AG04450 (cell line): ENCODE measurements at regions of chr14 and their contacts with region 1.

Region 1: GRCh38 chr14:51780006-51780692 is 80.3 kb upstream of the GNG2 start:
- DNase-seq: peak; percentile 24
- H3K4me3 ChIP-seq: peak overlapping the region; percentile 31; the same call in 1 of the 2 replicates
- H3K27ac ChIP-seq: no peak overlapping the region
- H3K27me3 ChIP-seq: no peaks in the 10 kb centered on the region
- CTCF ChIP-seq: peak; percentile 71

Region 2: DNA sequence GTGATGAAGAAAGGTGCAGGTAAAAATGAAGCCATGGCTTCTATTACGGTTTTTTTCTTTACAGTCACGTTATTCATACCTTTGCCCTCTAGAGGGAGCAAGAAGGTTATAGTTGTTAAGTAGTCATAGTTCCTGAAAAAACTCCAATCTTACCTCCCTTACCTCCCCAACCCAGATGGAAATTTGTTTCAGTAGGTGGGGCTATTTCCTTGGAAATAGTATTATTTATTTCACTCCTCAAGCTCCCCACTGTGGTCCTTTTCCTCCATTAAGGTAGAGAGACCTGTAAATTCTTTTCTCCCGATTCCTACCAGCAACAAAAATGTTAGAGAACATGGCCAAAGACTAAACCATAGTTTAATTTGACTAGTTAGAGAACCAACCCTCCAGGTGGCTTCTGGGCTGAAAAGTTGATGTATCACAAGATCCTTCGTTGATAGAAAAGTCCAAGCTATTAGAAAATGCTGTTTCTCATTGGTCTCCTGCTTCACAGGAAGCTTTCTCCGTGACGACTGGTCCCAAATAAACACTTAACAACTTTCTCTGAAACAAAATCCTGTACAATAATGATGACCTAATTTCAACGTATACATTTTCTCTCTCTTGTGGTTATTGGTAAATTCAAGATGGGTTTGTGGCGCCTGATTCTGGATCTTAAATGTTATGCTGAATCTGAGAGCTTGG is 496.6 kb before region 1 on chr14:
- CTCF ChIA-PET with region 1: interaction called, 272 read pairs
- POLR2A ChIA-PET with region 1: interaction called, 6 read pairs
- DNase-seq: peak; percentile 83
- H3K4me3 ChIP-seq: no peak overlapping the region
- H3K27ac ChIP-seq: no peak overlapping the region
- H3K27me3 ChIP-seq: no peaks in the 10 kb centered on the region
- CTCF ChIP-seq: peak; percentile 79

Region 3: DNA sequence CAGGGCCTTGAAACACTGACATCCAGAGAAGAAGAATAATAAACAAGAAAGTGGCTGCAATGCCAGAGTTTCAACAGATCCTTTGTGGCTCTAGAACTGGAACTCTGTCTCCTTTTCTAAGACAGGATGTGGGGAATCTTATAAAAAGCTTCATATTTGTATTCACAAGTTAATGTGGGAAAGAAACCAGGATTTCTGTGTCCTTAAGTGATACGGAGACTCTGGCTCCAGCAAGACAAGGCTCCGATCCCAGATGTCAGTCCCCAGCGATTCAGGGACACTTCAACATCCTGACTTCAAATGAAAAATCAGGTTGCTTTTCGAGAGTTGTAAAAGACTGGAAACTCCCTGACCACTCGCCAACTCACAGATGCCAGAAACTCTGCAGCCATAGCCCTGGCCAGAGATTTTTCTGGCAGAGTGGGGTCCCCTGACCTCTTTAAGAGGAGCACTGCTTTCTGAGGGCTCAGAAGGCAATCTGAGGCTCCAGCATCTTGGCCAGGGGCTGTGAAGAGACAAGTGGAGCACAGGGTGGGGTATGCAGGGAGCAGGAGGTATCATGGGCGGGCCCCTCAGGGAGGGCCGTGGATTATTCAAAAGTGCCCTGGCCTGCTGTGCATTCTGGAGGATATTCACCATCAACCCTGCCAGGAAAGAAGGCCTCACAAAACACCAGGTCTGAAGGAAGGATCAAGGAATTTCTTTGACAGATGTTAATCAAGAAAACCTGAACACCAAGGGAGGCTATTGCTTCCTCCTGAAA is 486.8 kb before region 1 on chr14:
- CTCF ChIA-PET with region 1: interaction called, 10 read pairs
- POLR2A ChIA-PET with region 1: no interaction called
- DNase-seq: peak; percentile 15
- H3K4me3 ChIP-seq: no peak overlapping the region
- H3K27ac ChIP-seq: peak overlapping the region; percentile 59
- H3K27me3 ChIP-seq: no peaks in the 10 kb centered on the region
- CTCF ChIP-seq: no peak

Region 4: GRCh38 chr14:51547260-51547659 is 232.9 kb before region 1 on chr14:
- CTCF ChIA-PET with region 1: interaction called, 10 read pairs
- POLR2A ChIA-PET with region 1: no interaction called
- DNase-seq: peak; percentile 99
- H3K4me3 ChIP-seq: no peak overlapping the region; the same call in 1 of the 2 replicates
- H3K27ac ChIP-seq: peak overlapping the region; percentile 86
- H3K27me3 ChIP-seq: no peaks in the 10 kb centered on the region
- CTCF ChIP-seq: no peak

Region 5: GRCh38 chr14:51657762-51658161 is 122.4 kb before region 1 on chr14:
- CTCF ChIA-PET with region 1: interaction called, 44 read pairs
- POLR2A ChIA-PET with region 1: interaction called, 3 read pairs
- DNase-seq: no peak
- H3K4me3 ChIP-seq: peak overlapping the region; percentile 37
- H3K27ac ChIP-seq: peak overlapping the region; percentile 24
- H3K27me3 ChIP-seq: no peaks in the 10 kb centered on the region
- CTCF ChIP-seq: no peak

Region 6: GRCh38 chr14:52589646-52590045 is 809.5 kb after region 1 on chr14:
- CTCF ChIA-PET with region 1: no interaction called
- POLR2A ChIA-PET with region 1: no interaction called
- DNase-seq: no peak
- H3K4me3 ChIP-seq: no peak overlapping the region
- H3K27ac ChIP-seq: no peak overlapping the region
- H3K27me3 ChIP-seq: no peaks in the 10 kb centered on the region
- CTCF ChIP-seq: no peak